ENCODE measurements at regions of chr1 and their contacts with region 1.

Region 1: DNA sequence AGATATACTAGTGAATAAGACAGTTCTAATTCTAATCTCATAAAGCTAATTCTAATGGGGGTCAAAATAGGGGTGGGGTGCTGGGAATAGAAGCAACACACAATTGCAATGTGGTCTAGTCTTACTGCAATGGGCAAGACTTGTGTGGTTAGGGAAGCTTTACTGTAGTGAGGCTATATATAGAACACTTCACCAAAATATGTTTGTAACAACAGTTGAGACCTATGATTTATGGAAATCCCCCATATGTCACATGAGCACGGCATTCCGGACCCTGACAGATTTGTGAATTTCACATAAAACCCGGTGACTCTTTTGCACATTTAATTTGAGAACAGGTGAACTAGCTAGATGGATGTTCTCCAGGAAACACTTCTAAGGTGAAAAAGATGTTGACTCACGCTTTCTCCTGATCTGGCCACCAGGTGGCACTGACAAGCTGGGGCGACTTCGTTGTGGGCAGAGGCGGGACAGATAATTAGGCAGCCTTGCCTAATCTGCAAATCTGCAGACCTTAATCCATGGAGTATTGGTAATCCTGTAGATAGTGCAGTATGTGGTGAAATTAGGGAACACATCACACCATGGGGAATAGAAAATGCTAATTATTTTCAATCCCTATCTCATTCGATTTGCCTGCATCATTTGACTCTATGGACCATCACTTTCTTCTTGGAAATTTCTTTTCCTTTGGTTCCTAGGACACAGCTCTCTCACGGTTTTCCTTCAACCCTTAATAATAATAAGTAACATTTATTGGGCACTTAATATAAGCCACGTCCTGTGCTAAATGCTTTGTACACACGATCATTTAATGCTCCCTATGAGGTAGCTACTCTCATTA is 37.7 kb downstream of the KIAA0040 start:
- H3K4me3 ChIP-seq: no peak overlapping the region
- H3K27ac ChIP-seq: no peak overlapping the region
- H3K4me1 ChIP-seq: no peaks in the 10 kb centered on the region
- CTCF ChIP-seq: peak; percentile 56

Region 2: DNA sequence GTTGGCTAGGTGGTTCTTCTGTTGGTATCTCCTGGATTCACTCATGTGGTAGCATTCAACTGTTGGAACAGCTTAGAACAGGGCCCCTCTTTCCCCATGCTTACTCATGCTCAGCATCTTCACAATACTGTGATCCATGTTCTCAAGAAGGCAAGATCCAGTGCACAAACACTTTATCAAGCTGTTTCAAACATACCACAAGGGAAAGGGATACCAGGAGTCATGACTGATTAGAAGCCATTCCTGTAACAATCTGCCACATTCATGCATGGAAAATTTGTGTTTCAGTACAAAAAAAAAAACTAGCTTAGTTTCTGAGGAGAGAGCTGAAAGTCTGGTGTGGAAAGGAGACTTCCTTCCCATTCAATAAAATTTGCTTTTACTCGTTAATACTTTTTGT is 324.9 kb before region 1 on chr1:
- CTCF ChIA-PET with region 1: no interaction called
- POLR2A ChIA-PET with region 1: no interaction called
- H3K4me3 ChIP-seq: no peak overlapping the region
- H3K27ac ChIP-seq: no peak overlapping the region
- H3K4me1 ChIP-seq: no peaks in the 10 kb centered on the region
- CTCF ChIP-seq: no peak

Region 3: DNA sequence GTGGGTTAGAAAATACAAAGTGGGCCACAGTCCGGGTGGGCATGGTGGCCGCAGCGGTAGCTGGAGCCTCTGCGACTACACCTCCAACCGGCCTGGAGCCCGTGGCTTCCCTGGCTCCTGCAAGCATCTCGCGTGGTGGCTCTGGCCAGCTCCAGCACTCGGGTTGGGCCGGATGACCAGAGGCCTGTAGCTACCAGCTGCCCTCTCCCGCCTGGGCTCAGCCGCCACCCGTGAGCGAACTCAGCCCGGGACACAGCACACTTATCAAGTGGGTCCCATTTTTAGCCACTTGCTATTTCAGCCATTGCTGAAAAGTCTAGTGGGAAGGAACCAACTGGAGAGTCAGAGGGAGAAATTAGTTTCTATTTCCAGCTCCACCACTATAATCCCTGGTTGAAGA is 262.8 kb before region 1 on chr1:
- CTCF ChIA-PET with region 1: no interaction called
- POLR2A ChIA-PET with region 1: no interaction called
- H3K4me3 ChIP-seq: no peak overlapping the region
- H3K27ac ChIP-seq: no peak overlapping the region
- H3K4me1 ChIP-seq: no peaks in the 10 kb centered on the region
- CTCF ChIP-seq: no peak

Region 4: DNA sequence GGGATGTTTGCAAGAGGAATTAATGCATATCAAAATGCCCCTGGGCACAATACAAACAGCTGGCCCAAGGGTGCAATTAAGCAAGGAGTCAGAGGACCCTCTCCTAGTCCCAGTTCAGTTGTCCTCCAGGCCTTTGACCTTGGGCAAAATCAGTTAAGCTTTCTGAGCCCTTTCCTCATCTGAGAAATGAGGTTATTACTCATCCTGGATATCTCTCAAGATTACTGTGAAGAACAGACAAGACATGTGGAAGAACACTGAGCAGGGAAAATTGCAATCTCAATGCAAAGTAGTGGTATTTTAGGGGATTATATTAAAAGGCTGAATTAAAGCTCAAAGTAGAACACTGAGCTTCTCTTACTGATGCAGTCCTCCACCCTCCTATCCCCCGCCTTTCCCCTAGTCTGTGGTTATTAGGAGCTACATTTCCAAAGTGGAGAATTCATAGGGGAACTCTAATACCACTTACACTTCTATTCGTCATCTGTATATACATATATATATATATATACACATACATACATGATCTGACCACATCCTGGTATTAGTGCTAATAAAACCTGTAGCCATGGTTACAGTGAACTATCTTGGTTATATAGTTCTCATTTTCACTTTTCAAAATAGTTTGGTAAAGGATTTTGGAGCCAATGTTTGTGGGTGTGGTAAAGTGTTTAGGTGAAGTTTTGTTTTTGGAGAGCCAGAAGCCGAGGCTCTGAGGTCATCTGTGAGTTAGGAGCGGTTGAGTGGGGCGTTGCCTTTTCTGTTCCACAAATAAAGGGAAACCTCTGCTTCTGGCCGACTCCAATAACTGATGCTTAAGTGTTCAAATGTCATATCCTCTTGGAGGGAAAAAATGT is 19.7 kb after region 1 on chr1:
- CTCF ChIA-PET with region 1: interaction called, 11 read pairs
- POLR2A ChIA-PET with region 1: no interaction called
- H3K4me3 ChIP-seq: no peak overlapping the region
- H3K27ac ChIP-seq: no peak overlapping the region
- H3K4me1 ChIP-seq: no peaks in the 10 kb centered on the region
- CTCF ChIP-seq: no peak

Region 5: GRCh38 chr1:175216444-175216843 is 61.6 kb after region 1 on chr1:
- CTCF ChIA-PET with region 1: interaction called, 29 read pairs
- POLR2A ChIA-PET with region 1: no interaction called
- H3K4me3 ChIP-seq: no peak overlapping the region
- H3K27ac ChIP-seq: no peak overlapping the region
- H3K4me1 ChIP-seq: peaks cover 16% of the 10 kb centered on the region
- CTCF ChIP-seq: no peak

Region 6: DNA sequence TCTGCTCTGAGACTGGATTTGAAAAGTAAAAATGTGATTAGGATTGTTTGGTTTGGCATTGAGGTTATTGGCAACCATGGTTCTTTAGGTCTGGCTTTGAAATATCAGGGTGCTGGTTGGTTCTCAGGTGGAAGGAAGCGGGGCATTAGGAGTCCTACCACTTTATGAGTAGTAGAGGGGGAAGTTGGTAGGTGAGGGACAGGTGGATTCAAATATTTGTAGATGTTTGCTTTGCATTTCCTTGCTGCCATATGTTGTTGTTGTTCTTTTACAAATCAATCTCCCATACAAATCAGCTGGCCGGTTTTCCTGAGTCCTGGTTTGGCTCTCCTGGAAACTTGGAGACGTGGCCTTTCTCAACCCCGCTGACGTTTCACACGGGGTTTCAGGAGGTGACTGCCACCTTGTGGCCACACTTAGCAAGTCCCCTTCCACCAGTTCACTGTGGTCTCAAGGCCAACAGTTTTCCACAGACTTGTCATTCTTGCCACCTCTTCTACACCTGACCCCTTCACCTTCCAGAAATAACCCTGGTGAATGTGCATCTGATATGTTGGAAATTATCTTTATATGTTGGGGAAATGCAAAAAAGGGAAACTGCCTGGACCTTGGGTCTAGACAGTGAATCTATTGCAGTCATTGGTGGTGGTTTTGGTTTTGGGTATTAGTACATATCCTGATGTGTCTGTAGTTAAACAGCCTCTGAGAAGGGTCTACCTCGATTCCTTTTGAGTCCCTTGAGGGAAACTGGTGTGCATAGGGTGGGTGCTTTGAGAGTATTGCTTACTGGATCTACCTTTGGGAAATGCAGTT is 164.8 kb after region 1 on chr1:
- CTCF ChIA-PET with region 1: interaction called, 156 read pairs
- POLR2A ChIA-PET with region 1: no interaction called
- H3K4me3 ChIP-seq: no peak overlapping the region
- H3K27ac ChIP-seq: no peak overlapping the region
- H3K4me1 ChIP-seq: no peaks in the 10 kb centered on the region
- CTCF ChIP-seq: peak; percentile 55; the same call in 1 of the 2 replicates